ENCODE measurements at regions of chr1 and their contacts with region 1.

Region 1: GRCh38 chr1:154760469-154760933 is 109.6 kb downstream of the KCNN3 start:
- DNase-seq: no peak
- ATAC-seq: peak; percentile 75
- H3K4me3 ChIP-seq: peak overlapping the region; percentile 34; the same call in 1 of the 2 replicates
- H3K27ac ChIP-seq: no peak overlapping the region
- H3K4me1 ChIP-seq: no peaks in the 10 kb centered on the region
- H3K27me3 ChIP-seq: no peaks in the 10 kb centered on the region
- CTCF ChIP-seq: peak; percentile 50 to 70 (median 61)
- EP300 ChIP-seq: no peak
- POLR2A ChIP-seq: no peak
- RAD21 ChIP-seq: peak; percentile 44

Region 2: DNA sequence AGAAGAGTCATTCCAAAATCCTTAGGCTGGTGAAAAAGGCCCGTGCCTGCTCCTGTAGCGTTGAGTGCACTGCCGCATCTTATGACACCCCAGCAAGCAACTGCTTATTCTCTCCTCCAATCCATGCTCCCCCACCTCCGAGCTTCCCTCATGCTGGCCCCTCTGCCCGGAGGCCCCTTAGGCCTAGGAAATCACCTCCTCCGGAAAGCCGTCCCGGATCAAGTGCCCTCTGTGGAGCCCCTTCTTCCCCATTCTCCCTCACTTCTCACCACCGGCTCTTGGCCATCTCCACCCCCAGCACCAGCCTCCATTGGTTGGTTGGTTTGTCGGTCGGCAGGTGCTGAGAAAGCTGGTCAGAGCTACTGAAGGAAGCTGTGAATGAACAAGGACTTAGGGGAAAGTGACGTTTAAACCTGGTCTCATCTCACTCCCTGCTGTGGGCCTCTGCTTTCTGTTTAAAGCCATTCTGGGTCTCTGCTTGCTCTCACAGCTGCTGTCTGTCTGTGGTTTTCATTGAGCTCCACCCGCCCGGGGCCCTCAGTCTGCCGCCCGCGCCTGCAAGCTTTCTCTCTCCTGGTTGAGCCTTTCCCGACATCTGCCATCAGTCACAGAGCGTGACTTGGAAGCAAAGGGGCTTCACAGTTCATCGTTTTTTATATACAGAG is 12.6 kb before region 1 on chr1:
- CTCF ChIA-PET with region 1: interaction called, 13 read pairs
- POLR2A ChIA-PET with region 1: interaction called, 3 read pairs
- RAD21 ChIA-PET with region 1: no interaction called
- SMC1A ChIA-PET with region 1: interaction called, 5 read pairs
- in situ Hi-C with region 1: no loop called
- intact Hi-C with region 1: no loop called
- DNase-seq: peak; percentile 66
- ATAC-seq: peak; percentile 89
- H3K4me3 ChIP-seq: peak overlapping the region; percentile 34; the same call in 1 of the 2 replicates
- H3K27ac ChIP-seq: peak overlapping the region; percentile 67
- H3K4me1 ChIP-seq: peaks cover 48% of the 10 kb centered on the region
- H3K27me3 ChIP-seq: no peaks in the 10 kb centered on the region
- CTCF ChIP-seq: no peak
- EP300 ChIP-seq: no peak
- POLR2A ChIP-seq: no peak
- RAD21 ChIP-seq: no peak